Activated CD4-positive, alpha-beta T cell treated with anti-CD3 and anti-CD28 coated beads for 36 hours (primary cell): ENCODE measurements at regions of chr16 and their contacts with region 1.

Region 1: GRCh38 chr16:87956365-87957231 is 5.4 kb downstream of the BANP start:
- DNase-seq: peak; percentile 89
- ATAC-seq: peak; percentile 65
- H3K4me3 Mint-ChIP-seq: peak overlapping the region; percentile 79
- H3K27ac Mint-ChIP-seq: peak overlapping the region; percentile 96
- H3K4me1 Mint-ChIP-seq: peaks cover 91% of the 10 kb centered on the region
- H3K27me3 Mint-ChIP-seq: no peaks in the 10 kb centered on the region

Region 2: GRCh38 chr16:87976665-87977064 is 20.1 kb after region 1 on chr16:
- CTCF ChIA-PET with region 1: interaction called, 4 read pairs
- POLR2A ChIA-PET with region 1: no interaction called
- intact Hi-C with region 1: loop called in 1 of 2 experiments (anchors 1 kb)
- DNase-seq: no peak
- ATAC-seq: no peak
- H3K4me3 Mint-ChIP-seq: no peak overlapping the region
- H3K27ac Mint-ChIP-seq: peak overlapping the region; percentile 34
- H3K4me1 Mint-ChIP-seq: peaks cover 61% of the 10 kb centered on the region
- H3K27me3 Mint-ChIP-seq: no peaks in the 10 kb centered on the region

Region 3: DNA sequence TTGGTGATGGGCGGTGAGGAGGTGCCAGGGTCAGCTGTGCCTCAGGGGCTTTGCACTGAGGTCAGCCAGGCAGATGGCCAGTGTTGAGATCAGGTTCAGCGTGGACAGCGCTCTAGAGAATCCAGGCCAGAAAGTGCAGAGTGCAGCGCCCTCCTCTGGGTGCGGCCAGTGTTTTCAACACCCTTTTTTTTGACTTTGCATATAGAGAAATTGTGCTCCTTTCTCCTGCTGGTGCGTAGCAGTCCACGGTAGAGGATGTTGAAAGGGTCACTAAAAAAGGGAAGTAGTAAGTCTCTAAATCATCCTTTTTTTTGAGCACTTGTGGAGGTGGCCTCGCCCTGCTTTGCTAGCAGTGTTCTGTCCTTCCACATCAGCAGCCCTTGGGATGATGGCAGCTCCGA is 48.6 kb after region 1 on chr16:
- CTCF ChIA-PET with region 1: no interaction called
- POLR2A ChIA-PET with region 1: no interaction called
- intact Hi-C with region 1: loop called in 1 of 2 experiments (anchors 2 kb)
- DNase-seq: peak; percentile 57
- ATAC-seq: peak; percentile 23
- H3K4me3 Mint-ChIP-seq: no peak overlapping the region
- H3K27ac Mint-ChIP-seq: no peak overlapping the region
- H3K4me1 Mint-ChIP-seq: peaks cover 6% of the 10 kb centered on the region
- H3K27me3 Mint-ChIP-seq: no peaks in the 10 kb centered on the region